Activated B cell treated with CpG ODN at 0.5 μM for 24 hours (primary cell): ENCODE measurements at regions of chr5 and their contacts with region 1.

Region 1: DNA sequence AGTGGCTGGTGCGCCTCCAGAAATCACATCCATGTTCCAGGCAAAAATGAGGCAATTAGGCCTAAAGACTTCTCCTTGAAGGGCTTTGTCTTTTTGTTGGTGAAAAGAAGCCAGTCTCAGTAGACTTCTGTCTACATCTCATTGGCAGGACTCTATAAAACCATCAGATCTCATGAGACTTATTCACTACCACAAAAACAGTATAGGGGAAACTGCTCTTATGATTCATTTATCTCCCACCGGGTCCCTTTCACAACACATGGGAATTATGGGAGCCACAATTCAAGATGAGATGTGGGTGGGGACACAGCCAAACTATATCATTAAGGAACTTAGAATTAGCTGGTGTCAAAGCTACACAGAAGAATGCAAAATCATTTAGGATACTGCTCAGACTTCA is 77.7 kb upstream of the SNX2 start:
- DNase-seq: no peak
- ATAC-seq: peak; percentile 35
- H3K4me3 Mint-ChIP-seq: peak overlapping the region; percentile 84
- H3K27ac Mint-ChIP-seq: peak overlapping the region; percentile 98
- H3K4me1 Mint-ChIP-seq: peaks cover 84% of the 10 kb centered on the region
- H3K27me3 Mint-ChIP-seq: no peaks in the 10 kb centered on the region
- CTCF ChIP-seq: no peak

Region 2: DNA sequence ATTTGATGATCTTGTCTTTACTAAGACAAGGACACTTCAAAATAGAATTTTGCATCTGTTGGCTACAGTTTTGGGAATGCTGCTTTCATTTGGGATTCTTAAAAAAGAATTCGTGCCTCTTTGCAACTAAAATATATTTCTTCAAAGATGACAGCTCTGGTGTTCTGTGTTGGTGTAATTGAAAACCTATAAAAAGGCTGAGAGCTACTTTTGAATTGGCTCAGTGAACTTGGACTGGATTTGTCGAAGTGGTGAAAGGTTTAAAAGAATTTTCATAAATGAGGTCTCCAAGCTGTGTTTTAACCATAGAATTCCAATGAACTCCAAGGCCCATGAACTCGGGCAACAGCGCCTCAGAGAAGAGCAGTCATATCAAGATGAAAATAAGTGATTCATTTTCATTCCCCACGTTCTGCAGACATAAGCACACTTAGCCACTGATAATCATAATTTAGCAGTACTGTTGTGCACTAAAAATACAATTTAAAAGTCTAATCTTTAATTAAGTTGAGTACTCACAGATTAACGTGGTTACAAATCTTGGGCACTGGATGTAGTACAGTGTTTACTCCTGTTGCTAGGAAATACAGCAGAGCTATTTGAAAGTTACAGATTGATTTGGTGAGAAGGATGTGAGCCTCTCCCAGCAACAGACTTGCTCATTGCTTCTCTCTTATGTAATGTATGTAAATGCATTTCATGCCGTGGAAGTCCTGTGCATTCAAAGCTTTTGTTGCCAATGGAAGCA is 374.2 kb before region 1 on chr5:
- CTCF ChIA-PET with region 1: no interaction called
- POLR2A ChIA-PET with region 1: no interaction called
- intact Hi-C with region 1: no loop called
- DNase-seq: no peak
- ATAC-seq: no peak
- H3K4me3 Mint-ChIP-seq: no peak overlapping the region
- H3K27ac Mint-ChIP-seq: no peak overlapping the region
- H3K4me1 Mint-ChIP-seq: no peaks in the 10 kb centered on the region
- H3K27me3 Mint-ChIP-seq: peaks cover 2% of the 10 kb centered on the region
- CTCF ChIP-seq: no peak

Region 3: DNA sequence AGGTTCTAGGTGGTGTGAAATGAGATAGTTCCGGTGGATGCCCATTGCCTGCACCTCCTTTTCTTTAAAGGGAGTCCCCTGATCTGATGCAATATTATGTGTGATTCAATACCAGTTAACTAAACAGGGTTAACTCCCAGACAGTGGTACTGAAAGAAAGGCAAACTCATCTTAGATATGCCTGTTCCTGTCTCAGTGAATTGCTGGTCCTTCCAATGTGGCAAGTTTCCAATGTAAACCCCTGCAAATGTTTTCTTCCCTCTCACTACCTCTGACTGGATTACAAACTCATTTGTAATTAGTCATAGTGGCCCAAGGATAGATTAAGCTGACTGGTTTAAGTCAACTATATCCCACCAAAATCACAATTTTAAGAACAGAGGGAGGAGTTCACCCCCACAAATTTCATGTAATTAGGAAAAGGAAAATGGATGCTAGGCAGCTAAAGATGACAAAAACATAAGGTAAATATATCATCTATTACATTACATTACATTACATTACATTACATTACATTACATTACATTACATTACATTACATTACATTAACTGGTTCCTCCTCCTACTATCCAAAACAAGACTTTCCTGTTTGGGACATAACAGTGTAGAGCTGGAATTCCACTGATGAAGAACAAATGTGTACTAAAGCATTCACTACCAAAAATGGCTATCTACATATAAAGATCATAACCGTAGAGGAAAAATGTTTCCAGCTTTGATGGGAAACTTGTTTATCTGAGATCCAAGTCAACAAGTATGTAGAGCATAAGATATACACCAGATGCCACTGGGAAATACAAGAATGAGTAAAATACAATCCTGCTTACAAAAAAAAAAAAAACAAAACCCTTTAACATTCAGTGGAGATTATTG is 43.9 kb before region 1 on chr5:
- CTCF ChIA-PET with region 1: no interaction called
- POLR2A ChIA-PET with region 1: no interaction called
- intact Hi-C with region 1: no loop called
- DNase-seq: no peak
- ATAC-seq: no peak
- H3K4me3 Mint-ChIP-seq: no peak overlapping the region
- H3K27ac Mint-ChIP-seq: no peak overlapping the region
- H3K4me1 Mint-ChIP-seq: peaks cover 19% of the 10 kb centered on the region
- H3K27me3 Mint-ChIP-seq: no peaks in the 10 kb centered on the region
- CTCF ChIP-seq: no peak

Region 4: DNA sequence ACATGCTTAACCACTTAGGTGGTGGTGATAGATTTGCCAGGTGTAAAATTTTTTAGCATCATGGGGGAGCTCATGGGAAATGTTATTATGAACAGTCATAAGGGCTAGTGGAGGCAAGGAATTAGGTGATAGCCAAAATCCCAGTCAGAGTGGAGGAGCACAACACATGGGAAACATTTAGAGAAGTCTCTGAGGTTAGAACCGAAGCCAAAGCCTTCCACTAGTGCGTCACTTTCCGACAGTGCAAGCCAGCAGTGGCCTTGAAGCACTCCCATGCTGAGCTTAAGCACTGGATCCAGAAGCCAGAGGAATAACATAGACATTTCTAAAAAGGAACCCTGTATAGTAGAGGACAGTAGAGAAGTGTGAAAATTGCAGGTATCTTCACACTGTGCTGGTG is 23.8 kb before region 1 on chr5:
- CTCF ChIA-PET with region 1: no interaction called
- POLR2A ChIA-PET with region 1: no interaction called
- intact Hi-C with region 1: loop called (anchors 2 kb)
- DNase-seq: no peak
- ATAC-seq: no peak
- H3K4me3 Mint-ChIP-seq: no peak overlapping the region
- H3K27ac Mint-ChIP-seq: no peak overlapping the region
- H3K4me1 Mint-ChIP-seq: peaks cover 17% of the 10 kb centered on the region
- H3K27me3 Mint-ChIP-seq: no peaks in the 10 kb centered on the region
- CTCF ChIP-seq: no peak

Region 5: GRCh38 chr5:122858454-122858853 is 161.3 kb after region 1 on chr5:
- CTCF ChIA-PET with region 1: no interaction called
- POLR2A ChIA-PET with region 1: interaction called, 12 read pairs
- intact Hi-C with region 1: no loop called
- DNase-seq: no peak
- ATAC-seq: no peak
- H3K4me3 Mint-ChIP-seq: no peak overlapping the region
- H3K27ac Mint-ChIP-seq: no peak overlapping the region
- H3K4me1 Mint-ChIP-seq: no peaks in the 10 kb centered on the region
- H3K27me3 Mint-ChIP-seq: no peaks in the 10 kb centered on the region
- CTCF ChIP-seq: no peak